Left lung (tissue), 14 donors: ENCODE measurements at regions of chr18 and their contacts with region 1.

Region 1: GRCh38 chr18:79819968-79820351 is 22.2 kb downstream of the KCNG2 start:
- DNase-seq: peak in 2 of 4 donors; percentile 50 to 72
- ATAC-seq: peak; percentile 67
- H3K4me3 ChIP-seq: no peak overlapping the region
- H3K27ac ChIP-seq: no peak overlapping the region
- H3K4me1 ChIP-seq: peaks cover 0 to 11% of the 10 kb centered on the region in 2 donors
- H3K27me3 ChIP-seq: peaks cover 0 to 27% of the 10 kb centered on the region in 2 donors
- CTCF ChIP-seq: no peak

Region 2: GRCh38 chr18:79877214-79878091 is 57.5 kb after region 1 on chr18:
- intact Hi-C with region 1: loop called in 1 of 2 experiments (anchors 10 kb)
- DNase-seq: peak in 1 of 4 donors; percentile 62
- ATAC-seq: no peak
- H3K4me3 ChIP-seq: no peak overlapping the region
- H3K27ac ChIP-seq: no peak overlapping the region
- H3K4me1 ChIP-seq: no peaks in the 10 kb centered on the region
- H3K27me3 ChIP-seq: peaks cover 0 to 42% of the 10 kb centered on the region in 2 donors
- CTCF ChIP-seq: no peak